Left cardiac atrium (tissue), 4 donors: ENCODE measurements at regions of chr12 and their contacts with region 1.

Region 1: GRCh38 chr12:93894391-93895088 is 217.4 kb downstream of the CRADD start:
- DNase-seq: peak; percentile 86
- ATAC-seq: peak; percentile 90 to 94

Region 2: GRCh38 chr12:93521225-93522080 is 373.1 kb before region 1 on chr12:
- intact Hi-C with region 1: no loop called
- DNase-seq: no peak
- ATAC-seq: peak in 1 of 2 donors; percentile 88

Region 3: GRCh38 chr12:93785262-93786010 is 109.1 kb before region 1 on chr12:
- intact Hi-C with region 1: loop called in 1 of 2 experiments (anchors 10 kb)
- DNase-seq: peak; percentile 47
- ATAC-seq: peak; percentile 83 to 98

Region 4: DNA sequence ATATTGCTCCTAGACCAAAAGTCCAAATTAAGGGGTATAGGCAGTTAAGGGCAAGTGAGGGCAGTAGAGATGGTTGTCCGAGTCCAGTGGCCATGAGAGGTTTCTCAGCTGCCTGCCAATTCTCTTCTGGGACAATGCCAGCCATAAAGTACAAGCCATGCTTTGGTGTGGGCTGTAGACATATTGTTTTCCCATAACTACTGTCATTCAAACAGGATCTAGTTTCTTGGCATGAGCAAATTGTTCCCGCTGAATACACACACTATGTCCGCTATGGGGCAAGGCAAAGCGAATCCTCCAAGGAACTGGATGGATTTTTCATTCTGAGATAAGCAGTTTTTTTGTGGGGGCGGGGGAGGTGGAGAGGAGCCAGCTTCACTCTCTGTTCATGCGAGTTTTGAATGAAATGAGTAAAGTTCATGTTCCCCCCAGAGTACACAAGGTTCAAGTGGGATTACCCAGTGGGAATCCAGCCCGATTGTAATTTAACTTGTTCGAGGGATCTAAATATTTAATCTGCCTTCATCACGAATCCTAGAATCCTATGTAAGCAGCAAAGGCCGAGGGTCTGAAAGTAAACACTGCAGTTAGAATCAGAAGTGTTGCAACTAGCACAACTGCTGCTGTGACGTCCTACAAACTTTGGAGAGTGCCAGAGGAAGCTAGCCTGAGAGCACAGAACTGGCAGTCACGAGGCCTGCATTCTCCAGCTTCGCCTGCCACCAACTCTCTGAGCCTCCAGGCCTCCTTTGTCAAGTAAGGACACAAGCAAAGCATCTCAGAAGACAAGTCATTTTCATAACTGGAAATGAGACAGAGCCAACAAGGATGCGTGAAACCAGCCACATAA is 80.3 kb before region 1 on chr12:
- intact Hi-C with region 1: loop called in 1 of 2 experiments (anchors 10 kb)
- DNase-seq: peak; percentile 81
- ATAC-seq: peak; percentile 78 to 87

Region 5: GRCh38 chr12:93946542-93947150 is 52.1 kb after region 1 on chr12:
- intact Hi-C with region 1: no loop called
- DNase-seq: no peak
- ATAC-seq: no peak